Activated CD8-positive, alpha-beta memory T cell treated with anti-CD3 and anti-CD28 coated beads, Interleukin-2, amount 10 ng/mL, durations not matched to agents 7 days and 5 days (primary cell): ENCODE measurements at regions of chr17 and their contacts with region 1.

Region 1: GRCh38 chr17:80426681-80427326 is 11.8 kb downstream of the ENDOV start:
- DNase-seq: peak; percentile 88
- ATAC-seq: peak; percentile 95
- H3K4me3 Mint-ChIP-seq: no peak overlapping the region
- H3K27ac Mint-ChIP-seq: no peak overlapping the region
- H3K4me1 Mint-ChIP-seq: peaks cover 20% of the 10 kb centered on the region
- H3K27me3 Mint-ChIP-seq: no peaks in the 10 kb centered on the region

Region 2: GRCh38 chr17:80377798-80378197 is 49.0 kb before region 1 on chr17:
- CTCF ChIA-PET with region 1: no interaction called
- DNase-seq: no peak
- ATAC-seq: no peak
- H3K4me3 Mint-ChIP-seq: no peak overlapping the region
- H3K27ac Mint-ChIP-seq: no peak overlapping the region
- H3K4me1 Mint-ChIP-seq: peaks cover 6% of the 10 kb centered on the region
- H3K27me3 Mint-ChIP-seq: no peaks in the 10 kb centered on the region

Region 3: DNA sequence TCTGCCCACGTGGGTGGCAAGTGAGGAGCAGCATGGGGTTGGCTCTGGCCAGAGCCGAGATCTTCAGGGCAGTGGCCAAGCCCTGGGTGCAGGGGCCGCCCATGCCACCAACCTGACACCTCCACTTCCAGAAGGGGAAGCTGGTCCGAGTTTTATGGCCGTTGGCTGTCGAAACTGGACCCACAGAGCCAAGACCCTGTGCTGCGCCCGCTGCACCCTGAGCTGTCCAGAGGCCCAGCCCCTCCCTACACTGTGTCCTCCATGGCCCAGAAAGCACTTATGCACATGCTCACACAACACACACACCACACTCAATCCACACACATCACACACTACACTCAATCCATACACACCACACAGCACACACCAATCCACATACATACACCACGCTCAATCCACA is 84.0 kb after region 1 on chr17:
- CTCF ChIA-PET with region 1: no interaction called
- DNase-seq: no peak
- ATAC-seq: no peak
- H3K4me3 Mint-ChIP-seq: no peak overlapping the region
- H3K27ac Mint-ChIP-seq: no peak overlapping the region
- H3K4me1 Mint-ChIP-seq: no peaks in the 10 kb centered on the region
- H3K27me3 Mint-ChIP-seq: peaks cover 18% of the 10 kb centered on the region

Region 4: GRCh38 chr17:80565343-80566053 is 138.7 kb after region 1 on chr17:
- CTCF ChIA-PET with region 1: interaction called, 10 read pairs
- DNase-seq: no peak
- ATAC-seq: no peak
- H3K4me3 Mint-ChIP-seq: no peak overlapping the region
- H3K27ac Mint-ChIP-seq: no peak overlapping the region
- H3K4me1 Mint-ChIP-seq: peaks cover 6% of the 10 kb centered on the region
- H3K27me3 Mint-ChIP-seq: no peaks in the 10 kb centered on the region

Region 5: DNA sequence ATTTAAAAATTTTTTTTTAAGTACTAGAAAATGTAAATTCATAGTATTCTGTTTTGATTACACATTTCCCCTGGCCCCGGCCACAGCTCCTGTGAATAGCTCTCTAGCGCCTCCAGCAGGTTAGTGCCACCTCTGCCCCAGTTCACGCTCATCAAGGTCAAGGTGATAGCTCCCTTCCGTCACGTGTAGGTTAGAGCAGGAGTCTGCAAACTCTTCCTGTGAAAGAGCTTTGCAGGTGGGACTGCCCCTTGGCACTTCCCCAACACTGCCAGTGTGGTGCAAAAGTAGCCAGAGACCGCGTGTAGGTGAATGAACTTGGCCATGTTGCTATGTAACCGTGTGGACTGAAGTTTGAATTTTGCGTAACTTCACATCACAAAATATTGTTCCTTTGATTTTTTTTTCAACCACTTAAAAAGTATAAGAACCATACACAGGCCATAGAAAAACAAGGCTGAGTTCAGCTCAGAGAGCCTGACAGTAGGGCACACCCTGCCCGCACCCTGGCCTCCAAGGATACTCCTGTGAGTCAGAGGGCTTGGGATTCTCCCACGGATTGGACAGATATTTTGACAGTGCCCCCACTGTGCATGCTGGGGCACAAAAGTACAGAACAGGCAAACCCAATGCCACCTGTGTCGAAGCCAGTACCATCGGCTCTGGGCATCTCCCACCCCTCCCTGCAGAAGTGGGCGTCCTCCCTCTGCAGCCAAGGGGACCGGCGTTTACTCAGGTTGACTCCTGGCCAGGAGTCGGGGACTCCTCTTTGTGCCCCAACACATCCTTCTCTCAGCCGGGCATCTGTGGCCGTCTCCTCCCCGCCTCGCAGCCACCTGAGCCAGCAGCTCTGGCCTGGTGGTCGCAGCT is 472.8 kb after region 1 on chr17:
- CTCF ChIA-PET with region 1: interaction called, 29 read pairs
- DNase-seq: peak; percentile 87
- ATAC-seq: peak; percentile 78
- H3K4me3 Mint-ChIP-seq: no peak overlapping the region
- H3K27ac Mint-ChIP-seq: peak overlapping the region; percentile 27
- H3K4me1 Mint-ChIP-seq: peaks cover 70% of the 10 kb centered on the region
- H3K27me3 Mint-ChIP-seq: no peaks in the 10 kb centered on the region

Region 6: GRCh38 chr17:80981062-80981902 is 554.5 kb after region 1 on chr17:
- CTCF ChIA-PET with region 1: interaction called, 23 read pairs
- DNase-seq: no peak
- ATAC-seq: peak; percentile 61
- H3K4me3 Mint-ChIP-seq: peak overlapping the region; percentile 32
- H3K27ac Mint-ChIP-seq: no peak overlapping the region
- H3K4me1 Mint-ChIP-seq: peaks cover 10% of the 10 kb centered on the region
- H3K27me3 Mint-ChIP-seq: peaks cover 11% of the 10 kb centered on the region